ENCODE measurements at regions of chr10 and their contacts with region 1.

Region 1: DNA sequence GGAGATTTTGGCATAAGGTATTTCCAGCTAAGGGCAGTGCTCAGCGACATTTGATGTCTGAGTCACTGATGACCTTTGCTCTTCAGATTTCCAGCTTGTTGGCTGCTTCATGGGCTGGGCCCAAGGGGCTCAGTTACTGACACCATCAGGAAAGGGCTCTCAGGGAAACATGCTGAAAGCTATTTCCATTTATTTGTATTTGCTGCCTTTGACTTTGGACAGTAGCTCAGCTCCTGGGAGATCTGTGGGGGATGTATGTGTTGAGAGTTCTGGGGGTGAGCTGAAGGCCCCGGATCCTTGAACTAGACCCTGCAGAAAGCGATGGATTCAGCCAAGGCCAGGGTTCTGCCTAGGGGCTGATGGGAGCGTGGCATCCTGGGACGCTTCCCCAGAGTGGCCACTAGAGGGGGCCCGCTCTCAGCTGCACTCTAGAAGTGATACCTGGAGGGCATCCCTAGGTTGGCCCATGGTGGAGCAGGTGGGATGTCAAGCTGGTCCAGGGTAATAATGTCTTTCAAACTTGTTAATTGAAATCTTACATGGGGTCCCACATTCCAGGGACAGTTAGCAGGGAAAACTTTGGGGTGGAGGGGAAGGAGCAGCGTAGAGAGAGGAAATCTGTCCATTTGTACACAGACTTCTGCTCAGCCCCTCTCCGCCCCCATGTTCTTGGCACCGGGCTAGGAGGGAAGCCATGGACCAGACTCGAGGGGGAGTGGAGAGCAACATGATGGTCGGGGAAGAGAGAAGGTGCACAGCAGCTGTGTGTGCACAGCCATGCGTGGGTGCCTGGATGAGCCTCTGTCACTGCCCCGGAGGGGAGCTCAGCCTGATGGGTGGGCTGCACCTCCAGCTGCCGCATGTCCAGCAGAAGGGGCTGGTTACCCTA is 3.0 kb upstream of the BTBD16 start:
- DNase-seq: no peak
- H3K4me3 ChIP-seq: no peak overlapping the region
- H3K27ac ChIP-seq: no peak overlapping the region
- H3K27me3 ChIP-seq: no peaks in the 10 kb centered on the region
- CTCF ChIP-seq: peak; percentile 96

Region 2: GRCh38 chr10:122051251-122051996 is 216.7 kb before region 1 on chr10:
- CTCF ChIA-PET with region 1: interaction called, 16 read pairs
- POLR2A ChIA-PET with region 1: no interaction called
- DNase-seq: peak; percentile 29
- H3K4me3 ChIP-seq: no peak overlapping the region
- H3K27ac ChIP-seq: no peak overlapping the region
- H3K27me3 ChIP-seq: no peaks in the 10 kb centered on the region
- CTCF ChIP-seq: peak; percentile 84

Region 3: DNA sequence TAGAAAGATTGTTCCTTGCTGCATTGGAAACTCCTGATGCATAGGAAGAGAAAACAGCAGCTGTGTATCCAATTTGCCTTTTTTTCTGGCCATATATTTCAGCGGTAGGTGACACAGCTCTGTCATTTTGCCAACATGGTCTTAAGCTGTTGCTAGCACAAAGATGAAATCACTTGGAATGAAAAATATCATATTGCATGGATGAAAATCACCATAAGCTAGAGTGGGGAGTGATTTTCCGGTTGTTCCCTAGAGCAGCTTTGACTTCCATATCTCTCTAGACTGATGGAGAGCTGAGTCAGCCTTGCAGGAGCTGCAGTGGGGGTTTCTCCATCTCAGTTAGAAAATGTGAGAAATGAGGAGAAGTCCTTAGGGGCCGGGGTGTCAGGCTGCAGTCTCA is 35.3 kb before region 1 on chr10:
- CTCF ChIA-PET with region 1: interaction called, 14 read pairs
- POLR2A ChIA-PET with region 1: no interaction called
- DNase-seq: peak; percentile 61
- H3K4me3 ChIP-seq: no peak overlapping the region
- H3K27ac ChIP-seq: no peak overlapping the region
- H3K27me3 ChIP-seq: no peaks in the 10 kb centered on the region
- CTCF ChIP-seq: no peak

Region 4: GRCh38 chr10:122252805-122253204 is 15.3 kb before region 1 on chr10:
- CTCF ChIA-PET with region 1: interaction called, 41 read pairs
- POLR2A ChIA-PET with region 1: no interaction called
- DNase-seq: no peak
- H3K4me3 ChIP-seq: no peak overlapping the region
- H3K27ac ChIP-seq: no peak overlapping the region
- H3K27me3 ChIP-seq: no peaks in the 10 kb centered on the region
- CTCF ChIP-seq: no peak

Region 5: GRCh38 chr10:122286867-122287266 is 18.8 kb after region 1 on chr10:
- CTCF ChIA-PET with region 1: interaction called, 23 read pairs
- POLR2A ChIA-PET with region 1: no interaction called
- DNase-seq: peak; percentile 48
- H3K4me3 ChIP-seq: no peak overlapping the region
- H3K27ac ChIP-seq: no peak overlapping the region
- H3K27me3 ChIP-seq: no peaks in the 10 kb centered on the region
- CTCF ChIP-seq: peak; percentile 5; the same call in 1 of the 2 replicates

Region 6: DNA sequence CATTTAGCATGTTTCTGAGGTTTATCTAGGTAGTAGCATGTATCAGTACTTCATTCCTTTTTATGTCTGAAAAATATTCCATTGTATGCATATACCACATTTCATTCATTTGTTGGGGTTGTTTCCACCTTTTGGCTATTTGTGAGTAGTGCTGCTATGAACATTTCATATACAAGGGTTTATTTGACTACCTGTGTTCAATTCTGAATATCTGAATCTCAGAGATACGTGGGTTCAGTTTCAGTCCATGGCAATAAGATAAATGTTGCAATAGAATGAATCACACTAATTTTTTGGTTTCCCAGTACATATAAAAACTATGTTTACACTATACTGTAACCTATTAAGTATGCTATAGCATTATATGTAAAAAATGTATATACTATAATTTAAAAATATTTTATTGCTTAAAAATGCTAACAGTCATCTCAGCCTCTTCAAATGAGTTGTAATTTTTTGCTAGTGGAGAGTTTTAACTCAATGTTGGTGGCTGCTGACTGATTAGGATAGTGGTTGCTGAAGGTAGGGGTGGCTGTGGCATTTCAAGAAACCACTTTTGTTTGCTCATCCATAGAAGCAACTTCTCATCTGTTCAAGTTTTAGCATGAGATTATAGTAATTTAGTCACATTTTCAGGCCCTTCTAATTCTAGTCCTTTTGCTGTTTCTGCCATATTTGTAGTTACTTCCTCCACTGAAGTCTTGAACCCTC is 120.3 kb after region 1 on chr10:
- CTCF ChIA-PET with region 1: no interaction called
- POLR2A ChIA-PET with region 1: no interaction called
- DNase-seq: no peak
- H3K4me3 ChIP-seq: no peak overlapping the region
- H3K27ac ChIP-seq: no peak overlapping the region
- H3K27me3 ChIP-seq: no peaks in the 10 kb centered on the region
- CTCF ChIP-seq: no peak